ENCODE measurements at regions of chr7 and their contacts with region 1.

Region 1: DNA sequence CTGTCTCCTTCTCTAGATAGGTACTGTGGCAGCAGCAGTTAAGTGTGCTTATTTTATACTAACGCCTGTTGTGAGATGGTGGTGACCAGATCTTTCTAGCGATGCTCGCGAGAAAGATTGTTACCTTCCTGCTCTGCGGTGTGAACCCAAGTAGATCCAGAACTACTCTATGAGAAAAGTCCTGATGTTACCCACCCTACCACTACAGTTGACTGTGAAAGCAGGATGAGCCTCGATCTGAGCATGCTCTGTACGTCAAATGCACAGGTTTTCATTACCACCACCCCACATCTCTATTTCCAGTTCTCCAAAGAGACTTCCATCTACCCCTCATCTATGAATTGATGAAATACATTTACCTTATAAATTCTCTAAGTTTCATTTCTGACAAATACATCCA is 64.6 kb upstream of the KCTD7 start:
- DNase-seq: no peak
- H3K4me3 ChIP-seq: no peak overlapping the region
- H3K4me3 Mint-ChIP-seq: no peak overlapping the region
- H3K27ac ChIP-seq: no peak overlapping the region
- H3K27ac Mint-ChIP-seq: peak overlapping the region in 1 of 7 donors; percentile 1
- H3K4me1 ChIP-seq: no peaks in the 10 kb centered on the region
- H3K4me1 Mint-ChIP-seq: no peaks in the 10 kb centered on the region
- H3K27me3 ChIP-seq: no peaks in the 10 kb centered on the region
- H3K27me3 Mint-ChIP-seq: peaks cover 0 to 3% (median 0%) of the 10 kb centered on the region in 3 donors
- CTCF ChIP-seq: no peak

Region 2: GRCh38 chr7:66583490-66584110 is 19.6 kb after region 1 on chr7:
- intact Hi-C with region 1: no loop called
- DNase-seq: peak; percentile 35 to 68 (median 47)
- H3K4me3 ChIP-seq: no peak overlapping the region
- H3K4me3 Mint-ChIP-seq: no peak overlapping the region
- H3K27ac ChIP-seq: peak overlapping the region in 1 of 2 donors; percentile 74
- H3K27ac Mint-ChIP-seq: peak overlapping the region in 6 of 7 donors; percentile 43 to 89 (median 84)
- H3K4me1 ChIP-seq: peaks cover 0 to 8% of the 10 kb centered on the region in 2 donors
- H3K4me1 Mint-ChIP-seq: peaks cover 10% of the 10 kb centered on the region
- H3K27me3 ChIP-seq: no peaks in the 10 kb centered on the region
- H3K27me3 Mint-ChIP-seq: peaks cover 0 to 1% (median 0%) of the 10 kb centered on the region in 3 donors
- CTCF ChIP-seq: no peak

Region 3: GRCh38 chr7:66748822-66749221 is 184.8 kb after region 1 on chr7:
- intact Hi-C with region 1: no loop called
- DNase-seq: no peak
- H3K4me3 ChIP-seq: no peak overlapping the region
- H3K4me3 Mint-ChIP-seq: no peak overlapping the region
- H3K27ac ChIP-seq: peak overlapping the region in 1 of 2 donors; percentile 26
- H3K27ac Mint-ChIP-seq: peak overlapping the region in 2 of 7 donors; percentile 64 to 71
- H3K4me1 ChIP-seq: peaks cover 0 to 7% of the 10 kb centered on the region in 2 donors
- H3K4me1 Mint-ChIP-seq: peaks cover 13% of the 10 kb centered on the region
- H3K27me3 ChIP-seq: no peaks in the 10 kb centered on the region
- H3K27me3 Mint-ChIP-seq: no peaks in the 10 kb centered on the region
- CTCF ChIP-seq: no peak

Region 4: DNA sequence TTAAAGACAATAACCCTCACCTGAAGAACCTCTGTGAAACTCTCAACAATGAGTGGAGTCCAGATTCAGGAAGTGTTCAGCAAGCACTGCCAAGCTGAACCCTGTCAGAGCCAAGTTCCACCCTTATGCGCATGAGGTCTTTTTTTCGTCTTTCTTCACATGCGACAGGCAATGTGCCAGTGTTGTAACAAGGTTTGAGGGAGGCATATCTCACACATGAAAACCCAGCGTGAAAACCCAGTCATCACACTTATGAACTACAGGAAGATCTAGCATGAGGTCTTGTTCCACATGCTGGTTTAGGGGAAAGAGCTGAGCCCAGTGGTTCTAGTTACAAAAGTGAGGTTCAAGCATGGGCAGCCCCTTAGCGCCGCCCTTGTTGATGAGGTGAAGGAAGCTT is 226.2 kb after region 1 on chr7:
- intact Hi-C with region 1: loop called in 1 of 2 experiments (anchors 1 kb)
- DNase-seq: no peak
- H3K4me3 ChIP-seq: no peak overlapping the region
- H3K4me3 Mint-ChIP-seq: no peak overlapping the region
- H3K27ac ChIP-seq: no peak overlapping the region
- H3K27ac Mint-ChIP-seq: peak overlapping the region in 1 of 7 donors; percentile 3
- H3K4me1 ChIP-seq: no peaks in the 10 kb centered on the region
- H3K4me1 Mint-ChIP-seq: no peaks in the 10 kb centered on the region
- H3K27me3 ChIP-seq: no peaks in the 10 kb centered on the region
- H3K27me3 Mint-ChIP-seq: peaks cover 0 to 2% (median 2%) of the 10 kb centered on the region in 3 donors
- CTCF ChIP-seq: no peak

Measured in CD14-positive monocyte (primary cell).